ENCODE measurements at regions of chr4 and their contacts with region 1.

Region 1: GRCh38 chr4:173370477-173371291 is at the start of gene SAP30:
- DNase-seq: peak; percentile 100
- ATAC-seq: peak; percentile 98
- H3K4me3 ChIP-seq: peak within 1 kb of the TSS; percentile 84 to 88
- H3K27ac ChIP-seq: peak within 1 kb of the TSS; percentile 78 to 98
- H3K4me1 ChIP-seq: no peaks in the 10 kb centered on the region
- H3K27me3 ChIP-seq: no peaks in the 10 kb centered on the region
- total RNA-seq, gene SAP30: 33.4 to 34.7 TPM

Region 2: GRCh38 chr4:173334085-173334772 is 36.5 kb before region 1 on chr4 and contains the start of gene HMGB2:
- intact Hi-C with region 1: loop called (anchors 1 to 5 kb)
- DNase-seq: peak; percentile 100
- ATAC-seq: peak; percentile 100
- H3K4me3 ChIP-seq: peak within 1 kb of the TSS; percentile 71 to 99
- H3K27ac ChIP-seq: peak within 1 kb of the TSS; percentile 89 to 90
- H3K4me1 ChIP-seq: no peaks in the 10 kb centered on the region
- H3K27me3 ChIP-seq: no peaks in the 10 kb centered on the region
- total RNA-seq, gene HMGB2: 33.0 to 42.5 TPM

Region 3: GRCh38 chr4:173494013-173494970 is 123.6 kb after region 1 on chr4:
- intact Hi-C with region 1: loop called in 1 of 2 experiments (anchors 5 kb)
- DNase-seq: peak; percentile 68 to 74
- ATAC-seq: peak; percentile 75
- H3K4me3 ChIP-seq: peak overlapping the region; percentile 37 to 76
- H3K27ac ChIP-seq: no peak overlapping the region
- H3K4me1 ChIP-seq: peaks cover 0 to 4% of the 10 kb centered on the region in 2 donors
- H3K27me3 ChIP-seq: no peaks in the 10 kb centered on the region

Region 4: DNA sequence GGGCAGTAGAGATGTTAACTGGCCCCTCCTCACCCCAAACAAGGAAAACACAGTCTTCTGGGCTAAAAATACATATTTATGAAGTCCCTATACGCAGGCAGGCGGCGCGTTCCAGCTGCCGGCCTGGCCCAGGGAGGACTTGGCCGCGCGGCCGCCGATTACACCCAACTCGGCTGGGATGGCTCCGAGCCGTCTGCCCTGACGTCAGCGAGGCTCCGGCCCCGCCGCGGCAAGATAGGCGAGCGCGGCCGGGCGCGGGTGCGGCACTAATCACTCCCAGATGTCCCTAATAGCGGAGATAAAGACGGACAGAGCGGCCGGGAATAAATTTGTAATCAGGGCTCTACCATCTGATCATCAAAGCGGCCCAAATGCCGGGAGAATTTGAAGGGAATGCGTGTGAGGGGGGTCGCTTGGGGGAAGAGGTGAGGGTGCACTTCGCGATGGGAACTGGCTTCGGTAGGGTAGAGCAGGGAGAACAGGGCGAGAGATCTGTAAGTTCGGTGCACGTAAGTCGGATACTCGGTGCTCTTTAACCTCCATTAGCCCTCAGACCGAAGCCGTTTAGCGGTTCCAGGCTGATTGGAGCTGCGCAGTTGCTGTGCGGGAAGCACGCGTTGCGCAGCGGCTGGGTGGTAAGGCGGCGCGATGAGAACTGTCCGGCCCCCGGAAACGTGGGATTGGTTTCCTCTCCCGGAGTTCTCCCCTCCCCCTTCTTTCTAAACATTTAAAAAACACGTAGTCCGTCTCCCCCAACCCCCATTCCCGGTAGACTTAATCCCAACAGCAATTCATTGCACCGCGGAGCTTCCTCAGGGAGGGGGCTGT is 151.7 kb after region 1 on chr4:
- intact Hi-C with region 1: loop called in 1 of 2 experiments (anchors 2 kb)
- DNase-seq: peak; percentile 91 to 93
- ATAC-seq: peak; percentile 91
- H3K4me3 ChIP-seq: peak overlapping the region; percentile 27 to 47
- H3K27ac ChIP-seq: peak overlapping the region; percentile 78 to 98
- H3K4me1 ChIP-seq: no peaks in the 10 kb centered on the region
- H3K27me3 ChIP-seq: no peaks in the 10 kb centered on the region

Region 5: DNA sequence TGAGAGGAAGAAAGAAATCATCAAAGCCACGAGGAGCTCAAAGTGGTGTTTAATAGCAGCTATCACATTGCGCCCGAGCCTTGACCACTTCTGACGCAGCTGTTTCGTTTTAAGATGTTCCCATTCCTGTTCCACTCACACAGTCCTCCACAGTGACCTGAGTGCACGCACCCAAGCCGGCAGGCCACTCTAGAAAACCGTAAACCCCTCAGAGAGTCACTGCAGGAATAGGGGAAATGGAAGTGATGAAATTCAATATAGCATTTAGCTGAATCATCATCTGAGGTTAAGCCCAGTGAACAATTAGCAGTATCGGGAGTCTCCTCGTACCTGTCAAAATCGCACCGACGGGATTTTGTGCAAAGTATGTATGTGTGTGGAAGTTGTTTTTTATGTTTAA is 177.2 kb after region 1 on chr4:
- intact Hi-C with region 1: no loop called
- DNase-seq: no peak
- ATAC-seq: no peak
- H3K4me3 ChIP-seq: no peak overlapping the region
- H3K27ac ChIP-seq: no peak overlapping the region
- H3K4me1 ChIP-seq: peaks cover 0 to 5% of the 10 kb centered on the region in 2 donors
- H3K27me3 ChIP-seq: no peaks in the 10 kb centered on the region